HEK293 (cell line): ENCODE measurements at regions of chr17 and their contacts with region 1.

Region 1: DNA sequence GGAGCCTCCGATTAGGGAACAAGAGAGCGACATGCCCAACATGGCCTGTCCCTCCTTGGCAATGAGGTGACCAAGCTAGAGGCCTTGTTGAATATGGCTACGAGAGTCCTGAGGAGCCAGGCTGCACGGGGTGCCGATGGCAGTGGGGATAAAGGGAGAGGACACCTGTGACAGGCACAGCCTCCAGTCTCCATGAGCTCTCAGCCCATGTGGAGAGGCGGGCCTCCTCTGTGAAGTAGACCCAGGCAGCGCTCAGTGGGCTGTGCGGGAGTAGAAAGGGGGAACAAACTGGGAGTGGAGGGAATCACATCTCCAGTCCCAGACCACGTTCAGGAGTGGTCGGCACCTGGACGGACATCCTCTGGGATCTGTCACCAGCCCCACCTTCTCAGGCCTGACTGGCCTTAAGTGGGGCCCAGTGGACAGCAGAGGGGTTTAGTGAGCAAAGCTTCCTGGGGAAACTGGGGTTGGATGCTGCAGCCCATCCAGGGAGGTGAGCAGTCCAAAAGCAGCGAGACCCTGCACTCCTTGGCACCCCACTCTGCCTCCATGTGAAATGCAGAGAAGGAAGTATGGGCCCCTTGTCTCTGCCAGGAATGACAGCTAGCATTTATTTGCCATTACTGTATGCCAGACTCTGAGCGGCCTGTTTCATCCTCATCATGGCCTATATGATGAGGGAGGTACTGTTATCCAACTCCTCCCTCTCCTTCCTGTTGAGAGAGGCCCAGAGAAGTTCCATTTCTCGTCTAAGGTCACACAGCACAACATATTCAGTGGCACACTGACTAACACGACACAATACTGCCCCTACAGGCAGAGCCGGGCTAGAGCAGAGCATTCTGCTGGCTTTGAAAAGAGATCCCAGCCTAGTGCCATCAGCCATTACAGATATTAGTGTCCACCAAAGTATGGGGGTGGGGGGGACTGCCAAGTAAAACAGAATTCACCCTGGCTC is 4.5 kb upstream of the TMEM92 start:
- H3K4me3 ChIP-seq: no peak overlapping the region
- H3K27ac ChIP-seq: no peak overlapping the region
- H3K4me1 ChIP-seq: peaks cover 12% of the 10 kb centered on the region
- CTCF ChIP-seq: peak; percentile 31; the same call in 1 of the 2 replicates

Region 2: DNA sequence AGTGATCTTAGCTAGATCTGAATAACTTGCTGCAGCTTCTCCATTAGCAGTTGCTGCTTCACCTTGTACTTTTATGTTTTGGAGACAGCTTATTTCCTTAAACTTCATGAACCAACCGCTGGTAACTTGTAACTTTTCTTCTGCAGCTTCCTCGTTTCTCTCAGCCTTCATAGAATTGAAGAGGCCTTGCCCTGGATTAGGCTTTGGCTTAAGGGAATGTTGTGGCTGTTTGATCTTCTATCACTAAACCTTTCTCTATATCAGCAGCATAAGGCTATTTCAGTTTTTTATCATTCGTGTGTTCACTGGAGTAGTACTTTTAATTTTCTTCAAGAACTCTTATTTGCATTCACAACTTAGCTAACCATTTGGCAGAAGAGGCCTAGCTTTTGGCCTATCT is 17.0 kb before region 1 on chr17:
- CTCF ChIA-PET with region 1: interaction called, 12 read pairs
- POLR2A ChIA-PET with region 1: no interaction called
- H3K4me3 ChIP-seq: no peak overlapping the region
- H3K27ac ChIP-seq: no peak overlapping the region
- H3K4me1 ChIP-seq: no peaks in the 10 kb centered on the region
- CTCF ChIP-seq: no peak

Region 3: DNA sequence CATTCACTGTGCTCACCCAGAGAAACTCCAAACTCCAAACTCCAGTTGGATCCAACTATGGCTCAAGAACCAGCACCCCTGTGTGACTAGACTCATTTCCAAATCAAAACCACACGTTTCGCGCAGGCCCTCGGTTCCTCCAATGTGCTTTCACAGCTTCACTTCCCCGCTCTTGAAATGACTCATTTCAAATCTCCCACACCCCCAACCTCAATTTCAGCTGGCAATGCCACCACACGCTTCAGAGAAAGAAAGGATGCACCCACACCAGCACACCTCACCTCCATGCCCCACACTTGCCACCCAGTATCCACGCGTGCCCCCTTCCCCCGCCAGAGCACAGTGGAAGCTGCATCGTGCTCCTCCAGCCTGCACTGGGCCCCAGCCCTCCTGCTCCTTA is 13.5 kb after region 1 on chr17:
- CTCF ChIA-PET with region 1: interaction called, 263 read pairs
- POLR2A ChIA-PET with region 1: interaction called, 4 read pairs
- H3K4me3 ChIP-seq: no peak overlapping the region
- H3K27ac ChIP-seq: no peak overlapping the region
- H3K4me1 ChIP-seq: peaks cover 5% of the 10 kb centered on the region; the same call in 1 of the 2 replicates
- CTCF ChIP-seq: no peak

Region 4: GRCh38 chr17:50304781-50305404 is 35.1 kb after region 1 on chr17:
- CTCF ChIA-PET with region 1: interaction called, 13 read pairs
- POLR2A ChIA-PET with region 1: interaction called, 3 read pairs
- H3K4me3 ChIP-seq: no peak overlapping the region
- H3K27ac ChIP-seq: no peak overlapping the region
- H3K4me1 ChIP-seq: no peaks in the 10 kb centered on the region
- CTCF ChIP-seq: no peak

Region 5: GRCh38 chr17:50440172-50440837 is 170.5 kb after region 1 on chr17:
- CTCF ChIA-PET with region 1: no interaction called
- POLR2A ChIA-PET with region 1: no interaction called
- H3K4me3 ChIP-seq: no peak overlapping the region
- H3K27ac ChIP-seq: no peak overlapping the region; the same call in 1 of the 2 replicates
- H3K4me1 ChIP-seq: peaks cover 20% of the 10 kb centered on the region
- CTCF ChIP-seq: no peak

Region 6: GRCh38 chr17:50686494-50687199 is 416.9 kb after region 1 on chr17:
- CTCF ChIA-PET with region 1: no interaction called
- POLR2A ChIA-PET with region 1: no interaction called
- H3K4me3 ChIP-seq: no peak overlapping the region
- H3K27ac ChIP-seq: no peak overlapping the region
- H3K4me1 ChIP-seq: peaks cover 6% of the 10 kb centered on the region; the same call in 1 of the 2 replicates
- CTCF ChIP-seq: no peak